Activated T-helper 2 cell treated with anti-CD3 and anti-CD28 coated beads, Interferon-gamma antibody, Interleukin-2, Interleukin-4, amounts not matched to agents 10 μg/mL and 5 μg/mL and 100 μg/mL, durations not matched to agents 14 hours and 24 hours and 36 hours (primary cell): ENCODE measurements at regions of chr3 and their contacts with region 1.

Region 1: GRCh38 chr3:133661454-133662277 is at the start of gene TOPBP1:
- DNase-seq: peak; percentile 86
- H3K4me3 Mint-ChIP-seq: peak within 1 kb of the TSS; percentile 99
- H3K27ac Mint-ChIP-seq: peak within 1 kb of the TSS; percentile 97
- H3K4me1 Mint-ChIP-seq: peaks cover 33% of the 10 kb centered on the region
- H3K27me3 Mint-ChIP-seq: no peaks in the 10 kb centered on the region
- total RNA-seq, gene TOPBP1: 90.6 and 91.2 TPM in 2 replicates

Region 2: GRCh38 chr3:133494469-133494868 is 167.2 kb before region 1 on chr3:
- intact Hi-C with region 1: loop called (anchors 5 kb)
- DNase-seq: no peak
- H3K4me3 Mint-ChIP-seq: no peak overlapping the region
- H3K27ac Mint-ChIP-seq: no peak overlapping the region
- H3K4me1 Mint-ChIP-seq: peaks cover 49% of the 10 kb centered on the region
- H3K27me3 Mint-ChIP-seq: no peaks in the 10 kb centered on the region

Region 3: GRCh38 chr3:133595341-133595740 is 66.3 kb before region 1 on chr3:
- intact Hi-C with region 1: loop called (anchors 5 kb)
- DNase-seq: no peak
- H3K4me3 Mint-ChIP-seq: no peak overlapping the region
- H3K27ac Mint-ChIP-seq: peak overlapping the region; percentile 79
- H3K4me1 Mint-ChIP-seq: peaks cover 28% of the 10 kb centered on the region
- H3K27me3 Mint-ChIP-seq: no peaks in the 10 kb centered on the region

Region 4: GRCh38 chr3:133620066-133620784 is 41.4 kb before region 1 on chr3:
- intact Hi-C with region 1: loop called (anchors 5 kb)
- DNase-seq: no peak
- H3K4me3 Mint-ChIP-seq: no peak overlapping the region
- H3K27ac Mint-ChIP-seq: peak overlapping the region; percentile 40
- H3K4me1 Mint-ChIP-seq: peaks cover 12% of the 10 kb centered on the region
- H3K27me3 Mint-ChIP-seq: no peaks in the 10 kb centered on the region

Region 5: DNA sequence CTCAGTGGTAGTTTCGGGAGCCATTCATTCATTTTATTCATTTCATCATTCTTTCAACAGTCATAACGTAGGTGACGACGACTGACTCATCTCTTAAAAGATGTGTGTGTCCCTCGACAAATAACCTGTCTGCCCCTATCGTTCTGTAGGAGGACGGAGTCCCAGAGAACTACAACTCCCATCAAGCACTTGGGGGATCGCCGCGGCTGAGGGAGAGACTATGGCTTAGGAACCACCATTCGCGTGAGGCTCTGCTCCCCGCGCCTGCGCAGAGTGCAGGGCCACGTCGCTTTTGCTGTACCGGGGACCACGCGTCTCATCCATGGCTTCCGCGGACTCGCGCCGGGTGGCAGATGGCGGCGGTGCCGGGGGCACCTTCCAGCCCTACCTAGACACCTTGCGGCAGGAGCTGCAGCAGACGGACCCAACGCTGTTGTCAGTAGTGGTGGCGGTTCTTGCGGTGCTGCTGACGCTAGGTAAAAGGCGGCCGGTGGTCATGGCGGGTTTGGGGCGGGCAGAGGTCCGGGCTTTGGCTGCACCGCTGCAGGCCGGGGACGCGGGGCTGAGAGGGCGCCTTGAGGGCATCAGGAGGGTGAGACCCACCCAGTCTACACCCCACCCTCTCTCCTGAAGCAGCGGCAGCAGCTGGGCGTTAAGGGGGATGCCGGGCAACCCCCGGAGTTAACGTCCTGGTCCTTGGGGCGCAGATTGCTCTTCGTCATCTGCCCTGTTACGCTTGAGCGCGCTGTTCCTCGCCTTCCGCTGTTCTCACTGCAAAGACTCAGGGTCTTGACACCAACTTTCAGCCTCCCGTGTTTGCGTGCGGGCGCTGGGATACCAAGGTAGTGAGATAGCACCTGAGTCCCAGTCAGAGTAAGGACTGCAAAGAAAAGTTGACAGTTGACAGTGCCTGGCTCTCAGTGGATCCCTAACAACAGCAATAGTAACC is 144.1 kb after region 1 on chr3 and contains the start of gene SRPRB:
- intact Hi-C with region 1: loop called (anchors 1 kb)
- DNase-seq: peak; percentile 94
- H3K4me3 Mint-ChIP-seq: peak within 1 kb of the TSS; percentile 94
- H3K27ac Mint-ChIP-seq: peak within 1 kb of the TSS; percentile 90
- H3K4me1 Mint-ChIP-seq: peaks cover 17% of the 10 kb centered on the region
- H3K27me3 Mint-ChIP-seq: peaks cover 9% of the 10 kb centered on the region
- total RNA-seq, gene SRPRB: 91.5 and 92.1 TPM in 2 replicates

Region 6: DNA sequence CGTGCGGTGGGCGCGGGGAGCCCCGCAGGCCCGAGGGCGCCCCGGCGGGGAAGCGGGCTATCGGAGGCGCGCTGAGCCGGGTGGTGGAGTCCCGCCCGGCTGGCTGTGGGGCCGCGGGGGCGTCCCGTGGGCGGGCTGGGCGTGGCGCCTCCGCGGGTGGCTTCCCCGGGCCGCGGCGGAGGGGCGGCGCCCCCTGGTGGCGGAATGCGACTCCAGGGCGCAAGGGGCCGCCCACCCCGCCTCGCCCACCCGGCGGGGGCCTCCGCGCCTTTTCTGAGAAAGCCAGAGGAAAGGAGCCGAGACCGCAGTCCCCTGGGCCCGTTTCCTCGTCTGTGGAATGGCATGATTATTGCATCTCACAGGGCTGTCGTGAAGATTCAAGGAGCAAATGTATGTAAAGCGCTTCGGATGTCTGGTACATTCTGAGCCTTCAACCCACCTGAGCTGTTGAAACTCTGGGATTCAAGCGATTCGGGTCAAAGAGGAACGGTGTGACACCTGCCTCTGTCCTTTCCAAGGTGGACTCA is 265.9 kb after region 1 on chr3:
- intact Hi-C with region 1: loop called (anchors 2 kb)
- DNase-seq: peak; percentile 54
- H3K4me3 Mint-ChIP-seq: peak overlapping the region; percentile 62
- H3K27ac Mint-ChIP-seq: no peak overlapping the region
- H3K4me1 Mint-ChIP-seq: peaks cover 9% of the 10 kb centered on the region
- H3K27me3 Mint-ChIP-seq: peaks cover 29% of the 10 kb centered on the region

Region 7: GRCh38 chr3:134485718-134486576 is 824.3 kb after region 1 on chr3 and contains the starts of genes ANAPC13 and CEP63:
- intact Hi-C with region 1: loop called (anchors 10 kb)
- DNase-seq: peak; percentile 92
- H3K4me3 Mint-ChIP-seq: peak within 1 kb of the TSS; percentile 97
- H3K27ac Mint-ChIP-seq: peak within 1 kb of the TSS; percentile 99
- H3K4me1 Mint-ChIP-seq: peaks cover 37% of the 10 kb centered on the region
- H3K27me3 Mint-ChIP-seq: no peaks in the 10 kb centered on the region
- total RNA-seq, gene ANAPC13: 27.3 and 27.4 TPM in 2 replicates
- total RNA-seq, gene CEP63: 18.0 and 20.1 TPM in 2 replicates